ENCODE measurements at regions of chr20 and their contacts with region 1.

Region 1: DNA sequence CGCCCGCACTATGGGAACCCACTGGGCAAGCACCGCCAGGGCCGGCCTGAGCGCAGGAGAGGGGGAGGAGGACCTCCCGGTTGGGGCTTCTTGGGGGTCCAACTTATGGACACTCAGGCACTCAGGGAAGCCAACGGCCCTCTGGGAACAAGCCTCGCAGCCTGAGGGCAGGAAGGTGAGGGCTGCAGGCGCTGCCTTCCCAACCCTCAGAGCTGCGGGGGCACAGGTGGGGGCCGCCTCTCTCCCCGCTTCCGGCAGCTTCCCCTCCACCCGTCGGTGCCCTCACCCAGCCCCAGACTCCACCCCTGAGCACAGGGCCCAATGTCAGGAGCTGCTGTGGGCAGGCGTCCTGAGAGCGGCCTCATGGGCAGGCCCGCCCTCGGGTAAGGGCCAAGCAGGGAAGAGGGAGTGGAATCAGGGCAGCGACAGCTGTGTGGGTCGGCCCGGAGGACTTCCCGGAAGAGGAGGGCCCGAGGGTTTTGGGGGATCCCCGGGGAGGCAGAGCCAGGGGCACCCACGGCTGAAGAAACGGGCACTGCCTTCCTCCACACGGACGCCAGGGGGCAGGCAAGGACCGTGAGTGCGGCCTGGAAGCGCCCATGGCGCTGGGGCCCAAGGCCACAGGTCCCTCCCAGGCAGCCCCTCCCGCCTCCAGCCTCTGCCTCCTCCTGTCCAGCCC is 488 bp upstream of the PTK6 start:
- DNase-seq: peak; percentile 84 to 97 (median 92)
- ATAC-seq: peak; percentile 90
- H3K4me3 ChIP-seq: peak overlapping the region; percentile 48 to 53
- H3K4me3 Mint-ChIP-seq: peak overlapping the region; percentile 75
- H3K27ac ChIP-seq: peak overlapping the region; percentile 34 to 84
- H3K27ac Mint-ChIP-seq: peak overlapping the region; percentile 81
- H3K4me1 ChIP-seq: peaks cover 22% of the 10 kb centered on the region
- H3K4me1 Mint-ChIP-seq: peaks cover 14% of the 10 kb centered on the region
- H3K27me3 ChIP-seq: no peaks in the 10 kb centered on the region
- H3K27me3 Mint-ChIP-seq: no peaks in the 10 kb centered on the region
- CTCF ChIP-seq: peak; percentile 91

Region 2: GRCh38 chr20:63520504-63520933 is 17.1 kb before region 1 on chr20 and contains the start of gene PPDPF:
- CTCF ChIA-PET with region 1: interaction called, 16 read pairs
- POLR2A ChIA-PET with region 1: interaction called, 57 read pairs
- intact Hi-C with region 1: loop called (anchors 1 kb)
- DNase-seq: peak; percentile 74 to 94 (median 85)
- ATAC-seq: peak; percentile 89
- H3K4me3 ChIP-seq: peak within 1 kb of the TSS; percentile 67 to 76
- H3K4me3 Mint-ChIP-seq: peak within 1 kb of the TSS; percentile 85
- H3K27ac ChIP-seq: peak within 1 kb of the TSS; percentile 54 to 85
- H3K27ac Mint-ChIP-seq: peak within 1 kb of the TSS; percentile 87
- H3K4me1 ChIP-seq: peaks cover 21% of the 10 kb centered on the region
- H3K4me1 Mint-ChIP-seq: peaks cover 14% of the 10 kb centered on the region
- H3K27me3 ChIP-seq: no peaks in the 10 kb centered on the region
- H3K27me3 Mint-ChIP-seq: no peaks in the 10 kb centered on the region
- CTCF ChIP-seq: no peak
- total RNA-seq, gene PPDPF: 284 to 287 TPM

Region 3: DNA sequence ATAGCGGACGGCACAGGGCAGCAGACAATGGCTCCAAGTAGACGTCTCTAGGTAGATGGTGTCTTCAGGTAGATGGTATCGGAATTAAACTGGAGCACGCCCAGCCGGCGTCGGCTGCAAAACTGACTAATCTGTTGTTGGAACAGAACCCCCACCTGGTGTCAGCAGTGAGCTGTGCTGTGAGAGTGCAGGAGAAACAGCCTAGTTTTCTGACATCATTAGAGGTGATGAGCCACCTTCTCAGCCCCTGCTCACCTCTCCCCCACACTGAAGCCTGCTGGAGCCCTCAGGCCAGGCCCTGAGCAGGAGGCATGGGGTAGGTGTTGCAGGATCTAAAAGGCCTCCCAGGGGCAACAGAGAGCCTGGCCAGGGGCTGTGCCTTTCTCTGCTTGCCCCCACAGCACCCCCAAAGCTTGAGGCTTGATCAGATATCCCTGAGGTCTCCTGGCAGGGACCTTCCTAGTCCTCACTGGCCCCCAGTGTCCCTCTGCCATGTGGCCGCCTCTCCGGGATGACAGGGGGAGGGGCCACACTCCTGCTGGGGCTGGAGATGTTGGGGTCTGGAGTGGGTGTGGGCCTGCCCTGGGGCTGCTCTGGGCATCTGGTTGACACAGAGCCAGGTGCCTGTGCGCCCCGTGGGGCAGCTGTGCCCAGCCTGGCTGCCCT is 43.3 kb after region 1 on chr20:
- CTCF ChIA-PET with region 1: interaction called, 60 read pairs
- POLR2A ChIA-PET with region 1: no interaction called
- intact Hi-C with region 1: loop called (anchors 1 kb)
- DNase-seq: peak; percentile 58 to 84 (median 77)
- ATAC-seq: peak; percentile 99
- H3K4me3 ChIP-seq: no peak overlapping the region
- H3K4me3 Mint-ChIP-seq: no peak overlapping the region
- H3K27ac ChIP-seq: no peak overlapping the region
- H3K27ac Mint-ChIP-seq: no peak overlapping the region
- H3K4me1 ChIP-seq: peaks cover 5% of the 10 kb centered on the region
- H3K4me1 Mint-ChIP-seq: peaks cover 3% of the 10 kb centered on the region
- H3K27me3 ChIP-seq: no peaks in the 10 kb centered on the region
- H3K27me3 Mint-ChIP-seq: no peaks in the 10 kb centered on the region
- CTCF ChIP-seq: peak; percentile 64

Region 4: DNA sequence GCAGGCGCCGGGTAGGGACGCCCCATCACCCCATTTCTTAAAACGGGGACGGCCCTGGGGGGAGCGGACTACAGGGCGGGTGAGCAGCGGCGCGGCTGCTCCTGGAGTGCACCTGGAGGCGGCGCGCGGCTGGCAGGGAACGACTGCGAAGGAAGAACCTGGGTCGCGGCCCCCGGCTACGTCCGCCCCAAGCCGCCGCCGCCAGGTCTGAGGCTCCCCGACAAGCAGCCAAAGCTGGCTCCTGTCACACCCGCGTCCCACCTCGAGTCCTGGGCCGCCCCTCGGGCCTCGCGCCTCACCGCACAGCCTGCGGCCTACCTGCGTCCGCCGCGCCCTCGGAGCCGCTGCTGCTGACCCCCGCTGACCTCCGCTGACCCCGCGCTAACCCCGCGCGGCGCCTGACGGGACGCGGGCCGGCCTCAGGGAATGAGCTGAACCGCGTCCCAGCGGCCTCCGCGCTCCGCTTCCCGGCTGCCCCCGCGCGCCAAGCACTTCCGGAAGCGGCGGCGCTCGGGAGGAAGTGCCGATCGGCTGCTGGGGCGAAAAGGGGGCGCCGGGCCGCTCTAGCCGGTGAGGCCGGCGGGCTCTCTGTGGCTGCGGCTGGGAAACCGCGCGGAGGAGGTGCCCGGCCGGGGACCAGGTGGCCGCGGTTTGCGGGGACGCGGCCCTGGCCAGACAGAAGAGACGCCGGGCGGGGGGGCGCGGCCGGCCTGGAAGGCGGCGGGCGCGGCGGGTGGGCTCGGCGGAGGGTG is 170.1 kb after region 1 on chr20 and contains the starts of genes ARFRP1 and ZGPAT:
- CTCF ChIA-PET with region 1: interaction called, 3 read pairs
- POLR2A ChIA-PET with region 1: interaction called, 5 read pairs
- intact Hi-C with region 1: loop called (anchors 2 to 5 kb)
- DNase-seq: peak; percentile 70 to 94 (median 86)
- ATAC-seq: peak; percentile 79
- H3K4me3 ChIP-seq: peak within 1 kb of the TSS; percentile 67 to 97
- H3K4me3 Mint-ChIP-seq: peak within 1 kb of the TSS; percentile 90
- H3K27ac ChIP-seq: peak within 1 kb of the TSS; percentile 51 to 71
- H3K27ac Mint-ChIP-seq: peak within 1 kb of the TSS; percentile 90
- H3K4me1 ChIP-seq: peaks cover 43% of the 10 kb centered on the region
- H3K4me1 Mint-ChIP-seq: peaks cover 42% of the 10 kb centered on the region
- H3K27me3 ChIP-seq: no peaks in the 10 kb centered on the region
- H3K27me3 Mint-ChIP-seq: no peaks in the 10 kb centered on the region
- CTCF ChIP-seq: no peak
- total RNA-seq, gene ARFRP1: 25.1 to 28.6 TPM
- total RNA-seq, gene ZGPAT: 25.5 to 25.7 TPM

Region 5: DNA sequence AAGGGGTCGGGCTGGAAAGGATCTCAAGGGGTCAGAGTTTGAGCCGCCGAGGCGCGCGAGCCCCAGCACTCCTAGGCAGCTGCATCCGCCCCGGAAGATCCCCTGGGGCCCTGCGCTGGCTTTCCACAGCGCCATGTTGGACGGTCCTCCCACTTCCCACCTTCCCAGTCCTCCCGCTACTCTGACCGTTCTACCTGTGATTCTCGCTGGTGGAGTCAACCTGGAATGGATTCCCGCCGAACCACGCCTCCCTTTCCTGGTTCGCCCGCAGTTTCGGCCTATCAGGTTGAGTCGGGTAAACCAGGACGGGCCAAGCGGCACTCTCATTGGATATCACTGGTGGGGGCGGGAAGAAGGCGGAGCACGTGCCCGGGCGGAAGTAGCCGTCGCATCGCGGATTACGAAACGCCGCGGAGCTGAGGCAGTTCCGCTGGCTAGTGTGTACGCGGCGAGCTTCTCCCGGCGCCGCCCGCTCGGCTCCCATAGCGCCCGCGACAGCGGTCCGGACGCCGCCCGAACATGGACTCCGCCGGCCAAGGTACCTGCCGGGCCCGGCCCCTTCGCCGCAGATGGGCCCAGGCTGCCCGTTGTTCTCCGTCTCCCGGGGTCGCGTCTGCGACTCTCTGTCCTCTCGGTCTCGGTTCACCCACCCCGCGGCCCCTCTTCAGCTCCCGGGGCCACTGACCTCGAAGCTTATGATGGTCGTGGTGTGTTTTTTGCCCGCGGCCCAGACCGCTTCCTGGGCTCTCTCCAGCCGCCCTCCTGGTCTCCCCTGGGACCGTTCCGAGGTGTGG is 327.4 kb after region 1 on chr20 and contains the start of gene TPD52L2:
- CTCF ChIA-PET with region 1: interaction called, 15 read pairs
- POLR2A ChIA-PET with region 1: interaction called, 8 read pairs
- intact Hi-C with region 1: loop called (anchors 1 kb)
- DNase-seq: peak; percentile 95 to 99 (median 97)
- ATAC-seq: peak; percentile 89
- H3K4me3 ChIP-seq: peak within 1 kb of the TSS; percentile 62 to 95
- H3K4me3 Mint-ChIP-seq: peak within 1 kb of the TSS; percentile 98
- H3K27ac ChIP-seq: peak within 1 kb of the TSS; percentile 59 to 86
- H3K27ac Mint-ChIP-seq: peak within 1 kb of the TSS; percentile 97
- H3K4me1 ChIP-seq: peaks cover 23% of the 10 kb centered on the region
- H3K4me1 Mint-ChIP-seq: peaks cover 34% of the 10 kb centered on the region
- H3K27me3 ChIP-seq: no peaks in the 10 kb centered on the region
- H3K27me3 Mint-ChIP-seq: no peaks in the 10 kb centered on the region
- CTCF ChIP-seq: no peak
- total RNA-seq, gene TPD52L2: 18.7 to 19.4 TPM

Region 6: GRCh38 chr20:64079273-64080012 is 541.8 kb after region 1 on chr20 and contains the start of gene RGS19:
- CTCF ChIA-PET with region 1: no interaction called
- POLR2A ChIA-PET with region 1: no interaction called
- intact Hi-C with region 1: loop called in 1 of 2 experiments (anchors 5 kb)
- DNase-seq: peak in 8 of 9 experiments; percentile 50 to 85 (median 69)
- ATAC-seq: peak; percentile 32
- H3K4me3 ChIP-seq: peak within 1 kb of the TSS; percentile 85 to 95
- H3K4me3 Mint-ChIP-seq: peak within 1 kb of the TSS; percentile 87
- H3K27ac ChIP-seq: peak within 1 kb of the TSS; percentile 66 to 77
- H3K27ac Mint-ChIP-seq: peak within 1 kb of the TSS; percentile 90
- H3K4me1 ChIP-seq: peaks cover 57% of the 10 kb centered on the region
- H3K4me1 Mint-ChIP-seq: peaks cover 39% of the 10 kb centered on the region
- H3K27me3 ChIP-seq: peaks cover 0 to 1% of the 10 kb centered on the region in 2 experiments
- H3K27me3 Mint-ChIP-seq: peaks cover 2% of the 10 kb centered on the region
- CTCF ChIP-seq: no peak
- total RNA-seq, gene RGS19: 6.9 to 8.1 TPM